Natural killer cell (primary cell): ENCODE measurements at regions of chr2 and their contacts with region 1.

Region 1: DNA sequence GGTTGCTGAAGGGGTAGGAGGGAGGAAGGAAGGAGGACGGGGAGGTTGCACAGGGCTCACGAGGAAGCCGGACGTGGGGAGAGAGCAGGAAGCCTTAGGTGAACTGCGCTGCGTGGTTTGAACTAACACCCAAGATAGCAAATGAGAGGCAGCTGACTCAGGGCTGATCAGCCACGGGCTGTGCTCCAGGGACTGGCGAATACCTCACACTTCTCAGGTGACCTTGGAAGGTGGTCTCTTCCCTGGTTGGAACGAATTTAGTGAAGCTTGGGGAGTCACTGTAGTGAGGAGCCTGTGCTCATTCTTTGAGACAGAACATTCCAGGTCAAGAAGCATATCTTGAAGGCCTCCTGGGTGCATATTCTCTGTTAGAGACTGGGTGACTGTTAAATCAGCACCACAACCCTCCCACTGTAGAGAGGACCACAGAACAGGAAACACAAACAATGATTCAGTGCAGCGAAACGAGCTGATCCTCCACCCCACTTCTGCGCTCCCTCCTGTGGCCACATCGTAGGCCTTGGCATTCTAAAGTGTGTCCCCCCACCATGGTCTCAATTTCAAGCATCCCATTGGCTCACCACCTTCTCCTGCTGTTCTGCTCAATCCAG is 33.8 kb downstream of the TOGARAM2 start:
- DNase-seq: peak; percentile 74 to 89
- ATAC-seq: peak; percentile 52 to 74 (median 56)
- H3K4me3 ChIP-seq: peak overlapping the region; percentile 34
- H3K4me3 Mint-ChIP-seq: peak overlapping the region; percentile 94
- H3K27ac ChIP-seq: peak overlapping the region; percentile 100
- H3K27ac Mint-ChIP-seq: peak overlapping the region; percentile 100
- H3K4me1 ChIP-seq: peaks cover 84% of the 10 kb centered on the region
- H3K4me1 Mint-ChIP-seq: peaks cover 78 to 84% of the 10 kb centered on the region in 2 donors
- H3K27me3 ChIP-seq: no peaks in the 10 kb centered on the region
- H3K27me3 Mint-ChIP-seq: no peaks in the 10 kb centered on the region
- CTCF ChIP-seq: peak; percentile 50

Region 2: DNA sequence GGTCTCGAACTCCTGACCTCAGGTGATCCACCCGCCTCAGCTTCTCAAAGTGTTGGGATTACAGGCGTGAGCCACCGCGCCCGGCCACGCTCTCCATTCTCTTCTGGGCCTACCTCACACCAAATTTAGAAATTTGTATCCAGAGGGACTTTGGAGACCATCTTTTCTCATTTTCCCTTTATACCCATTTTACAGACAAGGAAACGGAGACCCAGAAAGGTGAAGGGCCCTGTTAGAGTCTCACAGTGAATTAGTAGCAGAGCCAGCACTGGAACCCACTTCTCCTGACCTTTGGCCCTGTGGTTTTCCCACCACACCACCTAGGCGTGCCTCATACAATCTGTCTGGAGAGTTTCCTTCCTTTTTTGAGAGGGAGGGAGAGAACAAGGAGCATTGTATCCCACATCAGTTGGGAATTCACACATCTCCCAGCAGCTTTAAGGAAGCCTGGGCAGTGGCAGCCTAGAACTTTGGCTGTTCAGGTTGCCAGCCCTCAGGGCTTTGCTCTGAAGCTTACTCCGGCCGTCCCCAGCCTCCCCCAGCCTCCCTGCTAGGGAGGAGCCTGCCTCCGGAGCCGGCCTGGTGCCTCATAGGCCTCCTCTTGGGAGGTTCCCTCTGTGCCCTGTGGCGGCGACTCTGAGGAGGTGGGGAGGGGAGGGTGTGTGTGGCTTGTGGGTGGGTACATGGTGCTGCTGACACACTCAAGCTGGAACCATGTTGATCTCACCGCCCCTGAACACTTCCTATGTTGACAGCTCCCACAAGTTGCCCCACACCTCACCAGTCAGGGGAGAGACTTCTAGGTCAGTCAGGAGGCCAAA is 608.4 kb before region 1 on chr2:
- intact Hi-C with region 1: loop called (anchors 10 kb)
- DNase-seq: peak; percentile 84 to 87
- ATAC-seq: peak; percentile 61 to 85 (median 64)
- H3K4me3 ChIP-seq: no peak overlapping the region
- H3K4me3 Mint-ChIP-seq: peak overlapping the region; percentile 84
- H3K27ac ChIP-seq: peak overlapping the region; percentile 96
- H3K27ac Mint-ChIP-seq: peak overlapping the region; percentile 96 to 100
- H3K4me1 ChIP-seq: peaks cover 98% of the 10 kb centered on the region
- H3K4me1 Mint-ChIP-seq: peaks cover 60 to 64% of the 10 kb centered on the region in 2 donors
- H3K27me3 ChIP-seq: no peaks in the 10 kb centered on the region
- H3K27me3 Mint-ChIP-seq: no peaks in the 10 kb centered on the region
- CTCF ChIP-seq: peak; percentile 24

Region 3: DNA sequence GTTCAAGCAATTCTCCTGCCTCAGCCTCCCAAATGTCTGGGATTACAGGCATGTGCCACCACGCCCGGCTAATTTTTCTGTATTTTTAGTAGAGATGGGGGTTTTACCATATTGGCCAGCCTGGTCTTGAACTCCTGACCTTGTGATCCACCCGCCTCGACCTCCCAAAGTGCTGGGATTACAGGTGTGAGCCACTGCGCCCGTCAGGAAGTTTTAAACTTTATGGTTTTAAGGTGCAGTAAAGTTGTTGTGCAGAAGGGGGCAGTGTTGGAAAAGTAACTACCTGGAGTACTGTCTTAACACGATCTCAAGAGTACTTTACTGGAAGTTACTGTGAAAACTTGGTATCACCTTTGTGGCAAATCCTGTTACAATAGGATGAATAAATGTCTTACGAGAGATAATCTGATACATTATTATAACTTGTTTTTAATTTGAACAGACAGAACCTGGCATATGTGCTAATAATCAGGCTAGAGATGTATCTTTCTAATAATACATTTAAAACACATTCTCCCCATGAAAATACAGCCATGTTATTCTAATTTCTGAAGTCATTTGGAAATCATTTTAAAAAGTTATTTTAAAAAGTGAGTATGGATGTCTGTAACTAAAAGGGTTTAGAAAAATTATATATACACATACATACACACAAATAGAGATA is 193.5 kb before region 1 on chr2:
- intact Hi-C with region 1: loop called (anchors 10 kb)
- DNase-seq: peak; percentile 24 to 86
- ATAC-seq: peak; percentile 86 to 98 (median 94)
- H3K4me3 ChIP-seq: no peak overlapping the region
- H3K4me3 Mint-ChIP-seq: no peak overlapping the region
- H3K27ac ChIP-seq: no peak overlapping the region
- H3K27ac Mint-ChIP-seq: no peak overlapping the region
- H3K4me1 ChIP-seq: no peaks in the 10 kb centered on the region
- H3K4me1 Mint-ChIP-seq: no peaks in the 10 kb centered on the region
- H3K27me3 ChIP-seq: no peaks in the 10 kb centered on the region
- H3K27me3 Mint-ChIP-seq: no peaks in the 10 kb centered on the region
- CTCF ChIP-seq: peak; percentile 78

Region 4: GRCh38 chr2:29000481-29000880 is 14.4 kb before region 1 on chr2:
- intact Hi-C with region 1: loop called (anchors 1 kb)
- DNase-seq: peak; percentile 55 to 82
- ATAC-seq: peak; percentile 94 to 96 (median 95)
- H3K4me3 ChIP-seq: no peak overlapping the region
- H3K4me3 Mint-ChIP-seq: peak overlapping the region; percentile 63
- H3K27ac ChIP-seq: peak overlapping the region; percentile 48
- H3K27ac Mint-ChIP-seq: peak overlapping the region; percentile 91 to 94
- H3K4me1 ChIP-seq: peaks cover 35% of the 10 kb centered on the region
- H3K4me1 Mint-ChIP-seq: peaks cover 27 to 40% of the 10 kb centered on the region in 2 donors
- H3K27me3 ChIP-seq: no peaks in the 10 kb centered on the region
- H3K27me3 Mint-ChIP-seq: no peaks in the 10 kb centered on the region
- CTCF ChIP-seq: no peak

Region 5: GRCh38 chr2:29063646-29064343 is 48.9 kb after region 1 on chr2:
- intact Hi-C with region 1: no loop called
- DNase-seq: no peak
- ATAC-seq: no peak
- H3K4me3 ChIP-seq: no peak overlapping the region
- H3K4me3 Mint-ChIP-seq: no peak overlapping the region
- H3K27ac ChIP-seq: no peak overlapping the region
- H3K27ac Mint-ChIP-seq: no peak overlapping the region
- H3K4me1 ChIP-seq: no peaks in the 10 kb centered on the region
- H3K4me1 Mint-ChIP-seq: no peaks in the 10 kb centered on the region
- H3K27me3 ChIP-seq: no peaks in the 10 kb centered on the region
- H3K27me3 Mint-ChIP-seq: no peaks in the 10 kb centered on the region
- CTCF ChIP-seq: no peak

Region 6: GRCh38 chr2:29196792-29197788 is 182.2 kb after region 1 on chr2:
- intact Hi-C with region 1: loop called (anchors 2 kb)
- DNase-seq: peak; percentile 65 to 87
- ATAC-seq: peak; percentile 84 to 97 (median 95)
- H3K4me3 ChIP-seq: no peak overlapping the region
- H3K4me3 Mint-ChIP-seq: no peak overlapping the region
- H3K27ac ChIP-seq: no peak overlapping the region
- H3K27ac Mint-ChIP-seq: no peak overlapping the region
- H3K4me1 ChIP-seq: no peaks in the 10 kb centered on the region
- H3K4me1 Mint-ChIP-seq: peaks cover 5 to 6% of the 10 kb centered on the region in 2 donors
- H3K27me3 ChIP-seq: no peaks in the 10 kb centered on the region
- H3K27me3 Mint-ChIP-seq: no peaks in the 10 kb centered on the region
- CTCF ChIP-seq: peak; percentile 85